Activated naive CD8-positive, alpha-beta T cell treated with anti-CD3 and anti-CD28 coated beads, Interleukin-2, amount 10 ng/mL, durations not matched to agents 7 days and 5 days (primary cell): ENCODE measurements at regions of chr16 and their contacts with region 1.

Region 1: DNA sequence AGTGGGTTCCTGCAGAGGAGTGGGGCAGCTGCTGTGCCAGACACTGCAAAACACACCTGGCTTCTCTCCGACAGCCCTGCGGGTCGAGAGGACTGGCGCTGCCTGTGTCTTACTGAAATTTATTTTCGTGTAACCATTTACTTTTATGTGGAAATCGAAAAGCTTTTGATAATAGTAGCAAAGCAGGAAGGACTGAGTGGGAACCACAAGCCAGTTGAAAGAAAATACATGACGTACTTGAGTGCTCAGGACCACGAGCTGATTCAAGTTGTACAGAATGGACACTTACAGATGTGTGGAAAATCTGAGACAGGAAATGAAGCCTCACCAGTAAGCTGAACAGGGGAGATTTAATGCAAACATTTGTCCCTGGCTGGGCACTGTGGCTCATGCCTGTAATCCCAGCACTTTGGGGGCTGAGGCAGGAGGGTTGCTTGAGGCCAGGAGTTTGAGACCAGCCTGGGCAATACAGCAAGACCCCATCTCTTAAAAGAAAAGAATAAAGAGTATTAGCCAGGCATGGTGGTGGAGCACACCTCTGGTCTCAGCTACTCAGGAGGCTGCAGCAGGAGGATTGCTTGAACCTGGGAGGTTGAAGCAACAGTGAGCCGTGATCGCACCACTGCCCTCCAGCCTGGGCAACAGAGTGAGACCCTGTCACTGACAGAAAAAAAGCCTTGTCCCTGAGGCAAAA is 11.3 kb upstream of the RPL13 start:
- DNase-seq: no peak
- ATAC-seq: peak; percentile 92
- H3K4me3 Mint-ChIP-seq: peak overlapping the region; percentile 76
- H3K27ac Mint-ChIP-seq: peak overlapping the region; percentile 92
- H3K4me1 Mint-ChIP-seq: peaks cover 14% of the 10 kb centered on the region
- H3K27me3 Mint-ChIP-seq: no peaks in the 10 kb centered on the region

Region 2: DNA sequence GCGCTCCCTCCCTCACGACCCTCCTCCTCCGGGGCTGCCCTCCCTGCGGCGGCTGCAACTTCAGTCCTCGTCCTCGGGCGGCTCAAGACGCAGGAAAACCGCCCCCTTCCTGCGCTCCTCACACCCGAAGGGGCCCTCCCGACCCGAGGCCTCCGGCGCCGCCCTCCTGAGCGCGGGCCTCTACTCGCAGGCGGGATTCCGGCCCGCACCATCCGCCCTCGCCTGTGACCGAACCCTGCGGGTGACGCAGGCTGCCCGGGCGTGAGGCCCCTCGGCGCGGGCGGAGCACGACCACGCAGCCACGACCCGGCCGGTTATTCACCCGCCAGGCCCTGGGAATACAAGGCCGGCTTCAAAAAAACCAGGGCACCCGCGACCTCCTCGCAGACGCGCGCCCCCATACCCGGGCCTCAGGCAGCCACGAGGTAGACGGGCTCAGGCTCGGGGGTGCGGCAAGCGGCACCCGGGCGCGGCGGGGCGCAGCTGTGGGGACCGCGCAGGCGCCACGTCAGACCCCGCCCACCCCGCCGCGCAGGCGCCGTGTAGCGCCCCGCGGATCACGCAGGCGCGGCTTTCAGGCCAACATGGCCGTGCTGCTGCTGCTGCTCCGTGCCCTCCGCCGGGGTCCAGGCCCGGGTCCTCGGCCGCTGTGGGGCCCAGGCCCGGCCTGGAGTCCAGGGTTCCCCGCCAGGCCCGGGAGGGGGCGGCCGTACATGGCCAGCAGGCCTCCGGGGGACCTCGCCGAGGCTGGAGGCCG is 41.1 kb before region 1 on chr16 and contains the start of gene SPG7:
- POLR2A ChIA-PET with region 1: interaction called, 15 read pairs
- DNase-seq: peak; percentile 98
- ATAC-seq: peak; percentile 79
- H3K4me3 Mint-ChIP-seq: peak within 1 kb of the TSS; percentile 94
- H3K27ac Mint-ChIP-seq: peak within 1 kb of the TSS; percentile 95
- H3K4me1 Mint-ChIP-seq: peaks cover 29% of the 10 kb centered on the region
- H3K27me3 Mint-ChIP-seq: no peaks in the 10 kb centered on the region
- total RNA-seq, gene SPG7: 112 to 113 TPM

Region 3: DNA sequence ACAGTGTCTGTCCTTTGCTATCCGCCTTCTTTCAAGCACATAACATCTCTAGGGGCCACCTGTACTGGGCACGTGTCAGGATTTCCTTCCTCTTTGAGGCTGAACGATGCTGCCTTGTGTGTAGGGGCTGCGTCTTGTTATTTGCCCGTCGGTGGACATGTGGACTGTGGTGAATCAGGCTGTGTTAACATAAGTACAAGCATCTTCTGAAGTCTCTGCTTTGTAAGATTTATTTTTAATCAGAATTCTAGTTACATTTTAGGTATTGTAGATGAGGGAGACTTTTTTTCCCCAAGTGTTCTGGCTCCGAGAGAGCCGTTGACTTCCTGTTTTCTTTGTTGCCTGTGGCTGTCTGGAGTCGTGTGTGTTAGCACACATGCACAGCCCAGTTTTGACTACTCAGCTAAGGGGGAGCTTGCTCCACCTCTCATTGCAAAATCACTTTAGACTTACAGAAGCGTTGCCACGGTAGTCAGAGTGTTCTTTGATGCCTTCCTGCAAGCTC is 14.8 kb before region 1 on chr16:
- POLR2A ChIA-PET with region 1: interaction called, 12 read pairs
- DNase-seq: no peak
- ATAC-seq: peak; percentile 92
- H3K4me3 Mint-ChIP-seq: peak overlapping the region; percentile 57
- H3K27ac Mint-ChIP-seq: peak overlapping the region; percentile 86
- H3K4me1 Mint-ChIP-seq: peaks cover 16% of the 10 kb centered on the region
- H3K27me3 Mint-ChIP-seq: no peaks in the 10 kb centered on the region

Region 4: GRCh38 chr16:89560378-89561141 is 11.4 kb after region 1 on chr16 and contains the start of gene RPL13:
- POLR2A ChIA-PET with region 1: interaction called, 21 read pairs
- DNase-seq: peak; percentile 92
- ATAC-seq: peak; percentile 93
- H3K4me3 Mint-ChIP-seq: peak within 1 kb of the TSS; percentile 98
- H3K27ac Mint-ChIP-seq: peak within 1 kb of the TSS; percentile 97
- H3K4me1 Mint-ChIP-seq: peaks cover 47% of the 10 kb centered on the region
- H3K27me3 Mint-ChIP-seq: no peaks in the 10 kb centered on the region
- total RNA-seq, gene RPL13: 2,631 to 2,711 TPM